ENCODE measurements at regions of chr10 and their contacts with region 1.

Region 1: DNA sequence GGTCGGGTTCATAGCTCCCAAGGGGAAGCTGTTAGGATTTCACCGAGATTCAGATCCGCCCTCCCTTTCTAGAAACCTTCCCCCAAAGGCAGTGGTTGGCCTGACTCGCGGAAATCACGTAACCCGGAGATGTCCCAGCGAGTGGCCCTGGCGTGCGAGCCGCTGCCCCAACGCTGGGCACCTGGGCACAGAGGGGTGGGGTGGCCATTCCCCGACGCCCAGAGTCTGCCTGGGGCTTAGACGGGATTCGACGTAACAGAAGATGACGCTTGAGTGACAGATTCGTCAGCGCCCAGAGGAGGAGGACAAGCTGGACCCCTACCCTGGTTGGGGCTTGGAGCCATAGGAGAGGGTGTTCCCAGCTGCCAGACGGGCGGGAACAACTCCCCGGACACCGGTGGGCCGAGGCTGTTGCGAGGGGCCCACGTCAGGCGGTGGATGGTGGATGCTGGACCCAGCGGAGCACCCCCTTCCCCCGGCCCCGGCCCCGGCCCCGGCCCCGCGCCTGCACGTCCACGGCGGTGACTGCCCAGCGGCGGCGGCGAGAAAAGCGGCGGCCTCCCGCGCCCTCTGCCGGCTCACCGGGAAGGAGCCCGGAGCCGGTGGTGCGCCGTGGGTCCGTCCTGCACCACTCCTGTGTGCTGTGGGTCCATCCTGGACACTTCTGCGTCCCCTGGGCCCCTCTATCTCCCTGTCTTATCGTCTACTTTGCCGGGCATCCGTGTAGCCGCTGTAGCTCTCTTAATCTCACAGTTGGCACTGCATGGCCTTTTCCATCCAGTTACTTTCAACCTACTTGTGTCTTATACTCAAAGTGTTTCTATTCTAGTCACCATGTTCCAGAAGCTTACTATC is 35.4 kb upstream of the KNDC1 start:
- DNase-seq: peak; percentile 47 to 81
- ATAC-seq: peak; percentile 78 to 91
- H3K4me3 ChIP-seq: no peak overlapping the region
- H3K27ac ChIP-seq: no peak overlapping the region
- H3K4me1 ChIP-seq: no peaks in the 10 kb centered on the region
- CTCF ChIP-seq: peak; percentile 79
- EP300 ChIP-seq: no peak
- POLR2A ChIP-seq: no peak
- RAD21 ChIP-seq: peak; percentile 76 to 88

Region 2: DNA sequence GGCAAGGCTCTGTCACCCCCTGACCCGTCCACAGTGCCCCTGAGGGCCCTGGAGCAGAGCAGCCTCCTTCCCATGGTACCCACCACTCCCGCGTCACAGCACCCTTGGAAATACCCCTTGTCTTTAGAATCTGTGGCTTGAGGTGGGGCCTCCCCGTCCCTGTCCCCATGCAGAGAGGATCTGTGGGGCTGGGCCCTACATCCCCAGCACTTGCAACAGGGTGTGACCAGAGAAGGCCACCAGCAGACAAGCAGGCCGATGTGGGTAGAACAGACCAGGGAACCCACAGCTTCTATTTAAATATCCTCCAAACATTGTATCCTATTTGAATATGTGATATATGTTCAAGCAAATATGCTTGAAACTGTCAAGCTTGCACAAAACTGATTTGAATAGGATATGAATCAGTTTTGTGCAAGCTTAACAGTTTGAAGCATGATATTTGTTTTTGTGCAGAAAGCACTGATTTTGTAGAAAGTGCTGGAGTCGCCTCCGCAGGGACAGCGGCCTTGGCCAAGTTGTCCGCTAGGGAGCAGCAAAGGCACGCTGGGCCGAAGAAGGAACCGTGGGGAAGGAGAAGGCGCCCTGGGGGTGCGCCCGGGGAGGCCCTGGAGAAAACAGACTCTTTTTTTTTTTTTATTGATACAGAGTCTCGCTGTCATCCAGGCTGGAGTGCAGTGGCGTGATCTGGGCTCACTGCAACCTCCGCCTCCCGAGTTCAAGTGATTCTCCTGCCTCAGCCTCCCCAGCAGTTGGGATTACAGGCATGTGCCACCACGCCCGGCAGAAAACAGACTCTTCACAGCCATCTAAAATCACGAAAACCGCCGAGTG is 184.4 kb before region 1 on chr10:
- CTCF ChIA-PET with region 1: interaction called, 49 read pairs
- POLR2A ChIA-PET with region 1: no interaction called
- DNase-seq: peak; percentile 60 to 62
- ATAC-seq: peak; percentile 70 to 81; a peak in 5 of 6 replicates
- H3K4me3 ChIP-seq: no peak overlapping the region
- H3K27ac ChIP-seq: no peak overlapping the region
- H3K4me1 ChIP-seq: no peaks in the 10 kb centered on the region
- CTCF ChIP-seq: peak; percentile 92
- EP300 ChIP-seq: no peak
- POLR2A ChIP-seq: no peak
- RAD21 ChIP-seq: peak; percentile 92 to 94

Region 3: DNA sequence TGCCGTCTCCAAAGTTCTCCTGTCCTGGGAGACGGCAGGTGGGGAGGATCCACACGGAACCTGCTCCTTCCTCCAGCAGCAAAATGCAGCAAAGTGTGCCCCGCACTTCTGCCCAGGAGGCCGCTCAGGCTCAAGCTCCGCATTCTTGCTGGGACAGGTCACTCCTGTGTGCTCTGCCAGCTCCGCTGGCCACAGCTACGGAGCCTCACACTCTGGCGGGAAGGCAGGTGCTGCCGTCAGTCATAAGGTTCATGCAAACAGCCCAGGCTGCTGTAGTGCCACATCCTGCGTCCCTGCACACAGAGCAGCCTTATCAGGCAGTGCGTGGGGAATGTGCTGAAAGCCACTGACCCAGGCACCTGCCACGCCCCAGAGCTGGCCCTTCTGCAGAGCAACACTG is 14.5 kb before region 1 on chr10:
- CTCF ChIA-PET with region 1: interaction called, 19 read pairs
- POLR2A ChIA-PET with region 1: no interaction called
- DNase-seq: peak in 1 of 2 experiments; percentile 32
- ATAC-seq: peak; percentile 52 to 71; a peak in 5 of 6 replicates
- H3K4me3 ChIP-seq: no peak overlapping the region
- H3K27ac ChIP-seq: no peak overlapping the region
- H3K4me1 ChIP-seq: 0 out of 3 replicates have a peak, but pooled peaks cover 6% of the 10 kb centered on the region
- CTCF ChIP-seq: no peak
- EP300 ChIP-seq: no peak
- POLR2A ChIP-seq: no peak
- RAD21 ChIP-seq: no peak

Measured in A549 (cell line).